Panc1 (cell line): ENCODE measurements at regions of chr20 and their contacts with region 1.

Region 1: DNA sequence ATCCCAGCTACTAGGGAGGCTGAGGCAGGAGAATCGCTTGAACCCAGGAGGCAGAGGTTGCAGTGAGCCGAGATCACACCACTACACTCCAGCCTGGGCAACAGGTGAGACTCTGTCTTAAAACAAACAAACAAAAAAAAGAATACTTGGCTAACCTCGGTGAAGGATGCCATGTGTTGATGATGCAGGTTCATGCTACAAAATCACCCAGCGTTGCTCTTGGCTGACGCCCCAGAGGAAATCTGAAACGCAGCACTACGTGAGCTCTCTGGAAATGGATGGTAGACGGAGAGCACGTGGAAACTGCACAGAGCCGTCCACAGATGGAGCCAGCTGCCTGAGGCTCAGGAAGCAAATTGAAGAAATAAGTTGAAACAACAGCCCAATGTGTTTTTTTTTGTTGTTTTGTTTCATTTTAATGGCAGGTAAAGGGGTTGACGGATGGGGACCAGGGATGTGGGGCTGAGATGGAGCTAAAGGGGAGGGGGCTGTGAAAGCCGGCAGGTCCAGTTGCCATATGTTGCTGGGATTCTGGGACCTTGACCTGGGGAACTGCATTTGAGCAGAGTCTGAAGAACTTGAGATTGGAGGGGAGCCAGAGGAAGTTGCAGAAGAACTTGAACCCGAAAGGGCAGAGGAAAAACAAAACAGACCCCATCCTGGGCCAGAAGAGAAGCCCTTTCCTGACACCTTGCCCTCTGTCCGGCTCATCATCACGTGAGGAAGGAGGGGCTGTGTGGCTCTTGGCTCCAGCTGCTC is 12.8 kb upstream of the MANBAL start:
- DNase-seq: no peak
- ATAC-seq: peak; percentile 85
- H3K4me3 ChIP-seq: no peak overlapping the region
- H3K27ac ChIP-seq: no peak overlapping the region
- H3K4me1 ChIP-seq: peaks cover 4% of the 10 kb centered on the region; the same call in 1 of the 2 replicates
- H3K27me3 ChIP-seq: no peaks in the 10 kb centered on the region
- CTCF ChIP-seq: no peak; the same call in 1 of the 2 replicates

Region 2: DNA sequence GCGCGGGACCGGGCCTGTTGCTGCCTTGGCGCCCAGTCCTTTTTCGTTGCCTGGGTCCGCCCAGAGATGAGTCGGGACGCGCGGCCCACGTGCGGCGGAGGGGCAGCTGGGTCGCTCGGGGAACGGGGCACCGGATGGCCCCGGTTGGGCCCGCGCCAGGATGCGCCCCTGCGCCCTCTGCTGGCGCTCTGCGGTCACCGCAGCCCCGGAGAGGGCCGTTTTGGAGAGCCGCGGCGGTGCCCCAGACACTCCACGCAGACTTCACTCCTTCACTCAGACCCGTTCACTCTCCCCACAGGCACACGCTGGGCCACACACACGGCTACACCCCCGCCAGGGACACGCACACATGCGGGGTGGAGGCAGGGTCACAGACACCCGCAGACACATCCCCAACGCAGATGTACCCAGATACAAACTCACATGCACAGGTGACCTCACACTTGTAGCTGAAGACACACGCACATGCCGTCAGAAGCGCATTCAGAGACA is 108.1 kb after region 1 on chr20:
- CTCF ChIA-PET with region 1: no interaction called
- POLR2A ChIA-PET with region 1: no interaction called
- in situ Hi-C with region 1: no loop called
- intact Hi-C with region 1: loop called (anchors 5 kb)
- DNase-seq: no peak
- ATAC-seq: peak; percentile 67
- H3K4me3 ChIP-seq: no peak overlapping the region
- H3K27ac ChIP-seq: no peak overlapping the region
- H3K4me1 ChIP-seq: peaks cover 12% of the 10 kb centered on the region
- H3K27me3 ChIP-seq: no peaks in the 10 kb centered on the region
- CTCF ChIP-seq: peak; percentile 91